Right cardiac atrium (tissue), 5 donors: ENCODE measurements at regions of chr3 and their contacts with region 1.

Region 1: DNA sequence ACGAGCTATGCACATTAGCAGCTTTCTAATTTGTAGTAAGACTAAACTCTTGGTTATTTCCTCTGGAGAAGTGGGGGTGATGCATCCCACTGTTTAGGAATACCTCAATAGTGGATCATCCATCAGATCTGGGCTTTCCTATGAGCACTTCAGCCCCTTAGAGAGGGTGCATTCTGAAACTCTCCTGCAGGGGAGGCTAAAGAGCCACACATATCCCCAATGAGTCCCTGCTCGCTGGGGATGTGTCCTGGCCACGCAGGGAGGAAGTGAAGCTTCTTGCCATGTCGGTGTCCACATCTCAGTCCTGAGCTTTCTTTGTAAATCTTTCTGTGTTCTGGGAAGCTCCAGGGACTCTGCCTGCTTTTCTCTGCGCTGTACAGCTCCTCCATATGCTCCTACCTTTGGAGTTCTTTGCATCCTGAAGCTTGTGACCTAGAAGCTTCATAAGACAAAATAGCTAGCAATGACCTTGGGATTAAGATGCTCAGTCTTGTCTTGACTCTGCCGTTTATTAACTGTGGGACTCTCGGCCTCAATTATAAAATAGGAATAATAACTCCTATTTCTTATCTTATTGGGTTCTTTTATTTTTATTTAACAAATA is 28.3 kb upstream of the MASP1 start:
- DNase-seq: peak; percentile 75 to 87 (median 80)
- ATAC-seq: peak; percentile 93 to 95
- H3K4me3 ChIP-seq: no peak overlapping the region
- H3K27ac ChIP-seq: no peak overlapping the region
- H3K4me1 ChIP-seq: no peaks in the 10 kb centered on the region
- H3K27me3 ChIP-seq: no peaks in the 10 kb centered on the region

Region 2: GRCh38 chr3:186185194-186185787 is 1134.5 kb before region 1 on chr3:
- intact Hi-C with region 1: no loop called
- DNase-seq: no peak
- ATAC-seq: peak; percentile 55 to 65
- H3K4me3 ChIP-seq: no peak overlapping the region
- H3K27ac ChIP-seq: no peak overlapping the region
- H3K4me1 ChIP-seq: no peaks in the 10 kb centered on the region
- H3K27me3 ChIP-seq: no peaks in the 10 kb centered on the region

Region 3: GRCh38 chr3:187223799-187224198 is 96.0 kb before region 1 on chr3:
- intact Hi-C with region 1: loop called in 3 of 4 experiments (anchors 5 kb)
- DNase-seq: no peak
- ATAC-seq: no peak
- H3K4me3 ChIP-seq: no peak overlapping the region
- H3K27ac ChIP-seq: no peak overlapping the region
- H3K4me1 ChIP-seq: no peaks in the 10 kb centered on the region
- H3K27me3 ChIP-seq: no peaks in the 10 kb centered on the region

Region 4: GRCh38 chr3:187274977-187275338 is 44.8 kb before region 1 on chr3:
- intact Hi-C with region 1: no loop called
- DNase-seq: no peak
- ATAC-seq: no peak
- H3K4me3 ChIP-seq: no peak overlapping the region
- H3K27ac ChIP-seq: no peak overlapping the region
- H3K4me1 ChIP-seq: no peaks in the 10 kb centered on the region
- H3K27me3 ChIP-seq: no peaks in the 10 kb centered on the region

Region 5: DNA sequence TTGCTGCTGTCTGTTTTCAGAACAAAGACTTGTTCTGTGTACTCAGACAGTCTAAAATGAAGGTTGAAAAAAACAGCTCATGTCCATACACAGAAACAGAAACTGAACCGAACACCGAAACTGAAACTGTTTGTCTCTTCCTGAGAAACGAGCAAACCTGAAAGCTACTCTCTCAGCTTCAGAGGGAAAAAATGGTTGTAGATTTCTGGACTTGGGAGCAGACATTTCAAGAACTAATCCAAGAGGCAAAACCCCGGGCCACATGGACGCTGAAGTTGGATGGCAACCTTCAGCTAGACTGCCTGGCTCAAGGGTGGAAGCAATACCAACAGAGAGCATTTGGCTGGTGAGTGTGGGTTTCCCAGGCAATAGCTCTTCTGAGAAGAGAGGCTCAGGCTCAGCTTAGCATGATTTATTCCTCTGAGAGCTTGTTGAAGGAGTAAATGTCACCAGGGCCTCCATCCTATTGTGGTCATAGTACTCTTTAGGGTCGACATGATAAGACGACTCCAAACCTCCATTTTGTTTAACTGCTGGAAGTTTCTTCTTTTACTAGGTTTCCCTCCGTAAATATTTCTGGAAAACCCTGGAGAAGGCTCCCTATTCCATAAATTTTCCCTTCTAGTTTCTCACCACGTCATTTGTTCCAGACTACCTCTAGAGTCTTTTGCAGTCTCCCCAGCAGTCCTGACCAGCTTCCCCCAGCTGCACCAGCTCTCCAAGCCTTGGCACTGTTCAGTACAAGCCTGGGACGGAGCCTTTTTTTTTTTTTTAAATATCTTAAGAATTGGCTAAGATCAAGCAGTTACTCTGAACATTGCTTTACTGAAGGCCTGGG is 48.7 kb after region 1 on chr3 and contains the start of gene RTP4:
- intact Hi-C with region 1: no loop called
- DNase-seq: no peak
- ATAC-seq: peak; percentile 78 to 88
- H3K4me3 ChIP-seq: peak within 1 kb of the TSS; percentile 75
- H3K27ac ChIP-seq: peak within 1 kb of the TSS; percentile 97
- H3K4me1 ChIP-seq: no peaks in the 10 kb centered on the region
- H3K27me3 ChIP-seq: no peaks in the 10 kb centered on the region
- total RNA-seq, gene RTP4: 1.3 to 2.5 (median 1.9) TPM

Region 6: GRCh38 chr3:187679638-187680396 is 360.0 kb after region 1 on chr3:
- intact Hi-C with region 1: loop called (anchors 1 to 2 kb)
- DNase-seq: peak; percentile 77 to 91 (median 85)
- ATAC-seq: peak; percentile 92 to 94
- H3K4me3 ChIP-seq: no peak overlapping the region
- H3K27ac ChIP-seq: no peak overlapping the region
- H3K4me1 ChIP-seq: no peaks in the 10 kb centered on the region
- H3K27me3 ChIP-seq: peaks cover 2% of the 10 kb centered on the region

Region 7: GRCh38 chr3:187714404-187714979 is 394.7 kb after region 1 on chr3:
- intact Hi-C with region 1: loop called in 1 of 4 experiments (anchors 10 kb)
- DNase-seq: peak in 2 of 3 donors; percentile 39 to 72
- ATAC-seq: peak; percentile 83 to 86
- H3K4me3 ChIP-seq: no peak overlapping the region
- H3K27ac ChIP-seq: no peak overlapping the region
- H3K4me1 ChIP-seq: no peaks in the 10 kb centered on the region
- H3K27me3 ChIP-seq: no peaks in the 10 kb centered on the region